A549 (cell line): ENCODE measurements at regions of chr2 and their contacts with region 1.

Region 1: GRCh38 chr2:46988733-46989481 is 73.3 kb upstream of the MCFD2 start:
- DNase-seq: no peak
- ATAC-seq: no peak
- H3K4me3 ChIP-seq: no peak overlapping the region
- H3K27ac ChIP-seq: peak overlapping the region in 1 of 2 experiments; percentile 94; a peak in 4 of 6 replicates
- H3K4me1 ChIP-seq: peaks cover 55% of the 10 kb centered on the region
- CTCF ChIP-seq: no peak
- EP300 ChIP-seq: no peak
- POLR2A ChIP-seq: no peak
- RAD21 ChIP-seq: 0 out of 5 replicates have a peak, but pooled peaks of 1 of the 2 experiments have one; percentile 10

Region 2: GRCh38 chr2:46763861-46764260 is 225.0 kb before region 1 on chr2:
- CTCF ChIA-PET with region 1: no interaction called
- POLR2A ChIA-PET with region 1: no interaction called
- DNase-seq: no peak
- ATAC-seq: no peak
- H3K4me3 ChIP-seq: no peak overlapping the region
- H3K27ac ChIP-seq: no peak overlapping the region
- H3K4me1 ChIP-seq: peaks cover 15% of the 10 kb centered on the region
- CTCF ChIP-seq: no peak
- EP300 ChIP-seq: no peak
- POLR2A ChIP-seq: no peak
- RAD21 ChIP-seq: no peak

Region 3: DNA sequence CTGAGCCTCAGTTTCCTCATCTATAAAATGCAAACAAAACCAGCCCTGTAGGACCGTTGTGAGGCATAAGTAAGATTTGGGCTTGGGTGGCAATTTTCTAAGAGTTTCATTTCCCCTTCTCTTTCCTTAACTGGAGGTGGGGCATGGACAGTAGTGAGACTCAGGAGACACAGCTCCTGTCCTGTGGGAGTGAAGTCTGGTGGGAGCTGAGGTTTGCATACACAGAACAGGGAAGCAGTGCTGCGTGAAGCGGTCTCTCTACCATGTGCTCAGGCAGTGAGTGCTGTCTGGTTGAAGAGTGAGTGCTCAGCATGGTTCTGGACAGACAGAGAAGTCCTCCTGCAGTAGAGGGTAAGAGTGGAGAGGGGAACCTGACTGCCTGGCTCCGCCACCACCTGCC is 11.0 kb before region 1 on chr2:
- CTCF ChIA-PET with region 1: no interaction called
- POLR2A ChIA-PET with region 1: no interaction called
- DNase-seq: no peak
- ATAC-seq: no peak
- H3K4me3 ChIP-seq: no peak overlapping the region
- H3K27ac ChIP-seq: 0 out of 6 replicates have a peak overlapping the region, but pooled peaks of 1 of the 2 experiments have one; percentile 20
- H3K4me1 ChIP-seq: peaks cover 30% of the 10 kb centered on the region
- CTCF ChIP-seq: no peak
- EP300 ChIP-seq: no peak
- POLR2A ChIP-seq: no peak
- RAD21 ChIP-seq: no peak

Region 4: DNA sequence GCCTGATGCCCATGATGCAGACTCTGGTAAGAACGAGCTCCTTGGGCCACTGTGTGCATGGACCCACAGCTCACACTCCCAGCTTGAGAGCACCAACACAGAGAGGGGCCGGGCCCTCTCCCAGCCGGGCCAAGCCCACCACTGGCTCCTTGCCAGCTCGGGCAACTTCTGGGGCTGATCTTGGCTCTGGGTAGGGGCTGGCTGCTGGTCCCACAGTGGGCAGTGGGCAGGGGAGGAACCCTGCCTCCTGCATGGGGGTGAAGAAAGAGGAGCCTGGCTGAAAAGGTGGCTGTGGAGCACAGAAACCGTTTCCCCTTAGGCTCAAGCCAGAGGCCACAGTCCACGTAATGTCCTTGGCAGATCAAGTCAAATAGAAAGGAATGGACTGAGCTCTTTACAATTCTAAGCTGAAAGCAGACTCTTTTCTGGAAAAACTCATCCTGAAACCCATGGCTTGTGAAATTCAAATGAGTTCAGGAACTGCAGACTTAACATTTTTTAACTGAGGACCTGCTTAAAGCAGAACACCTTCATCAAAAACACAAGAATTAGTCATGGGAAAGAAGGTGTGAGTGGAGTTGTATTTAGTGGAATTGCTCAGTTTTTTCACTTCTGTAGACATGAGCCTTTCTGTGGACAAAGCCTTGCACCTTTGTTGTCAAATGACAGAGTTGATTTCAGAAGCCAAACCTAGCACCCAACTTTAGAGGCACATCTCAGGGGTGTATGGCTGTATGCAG is 61.3 kb after region 1 on chr2:
- CTCF ChIA-PET with region 1: no interaction called
- POLR2A ChIA-PET with region 1: no interaction called
- DNase-seq: no peak
- ATAC-seq: no peak
- H3K4me3 ChIP-seq: no peak overlapping the region
- H3K27ac ChIP-seq: peak overlapping the region in 1 of 2 experiments; percentile 25; a peak in 2 of 6 replicates
- H3K4me1 ChIP-seq: no peaks in the 10 kb centered on the region
- CTCF ChIP-seq: no peak
- EP300 ChIP-seq: no peak
- POLR2A ChIP-seq: no peak
- RAD21 ChIP-seq: no peak

Region 5: DNA sequence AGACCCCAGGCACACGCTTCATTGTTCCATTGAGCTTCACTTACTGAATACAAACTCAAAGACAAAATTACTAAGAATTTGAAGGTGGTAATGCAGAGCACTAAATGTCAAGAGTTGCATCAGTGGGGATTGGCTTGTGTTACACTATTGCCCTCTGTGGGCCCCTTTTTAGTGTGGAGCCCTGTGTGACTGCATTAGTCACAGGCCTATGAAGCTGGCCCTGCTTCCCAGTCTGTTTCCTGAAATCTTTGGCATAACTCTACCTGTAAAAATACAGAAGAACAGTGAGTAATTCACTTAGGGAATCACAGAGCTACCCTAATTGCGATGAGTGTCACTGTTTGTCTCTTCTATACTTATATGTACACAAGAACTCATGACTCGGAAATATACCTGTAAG is 206.2 kb after region 1 on chr2:
- CTCF ChIA-PET with region 1: interaction called, 11 read pairs
- POLR2A ChIA-PET with region 1: no interaction called
- DNase-seq: peak in 1 of 2 experiments; percentile 53
- ATAC-seq: no peak
- H3K4me3 ChIP-seq: no peak overlapping the region
- H3K27ac ChIP-seq: peak overlapping the region; percentile 94
- H3K4me1 ChIP-seq: peaks cover 85% of the 10 kb centered on the region
- CTCF ChIP-seq: peak; percentile 20; the same call in 1 of the 3 replicates
- EP300 ChIP-seq: peak in 1 of 2 experiments; percentile 16; a peak in 1 of 5 replicates
- POLR2A ChIP-seq: no peak
- RAD21 ChIP-seq: peak; percentile 52 to 70